ENCODE measurements at regions of chr10 and their contacts with region 1.

Region 1: GRCh38 chr10:111872591-111872990 is 311.0 kb downstream of the GPAM start:
- DNase-seq: no peak
- H3K4me3 Mint-ChIP-seq: no peak overlapping the region
- H3K27ac Mint-ChIP-seq: no peak overlapping the region
- H3K4me1 Mint-ChIP-seq: no peaks in the 10 kb centered on the region
- H3K27me3 Mint-ChIP-seq: no peaks in the 10 kb centered on the region

Region 2: DNA sequence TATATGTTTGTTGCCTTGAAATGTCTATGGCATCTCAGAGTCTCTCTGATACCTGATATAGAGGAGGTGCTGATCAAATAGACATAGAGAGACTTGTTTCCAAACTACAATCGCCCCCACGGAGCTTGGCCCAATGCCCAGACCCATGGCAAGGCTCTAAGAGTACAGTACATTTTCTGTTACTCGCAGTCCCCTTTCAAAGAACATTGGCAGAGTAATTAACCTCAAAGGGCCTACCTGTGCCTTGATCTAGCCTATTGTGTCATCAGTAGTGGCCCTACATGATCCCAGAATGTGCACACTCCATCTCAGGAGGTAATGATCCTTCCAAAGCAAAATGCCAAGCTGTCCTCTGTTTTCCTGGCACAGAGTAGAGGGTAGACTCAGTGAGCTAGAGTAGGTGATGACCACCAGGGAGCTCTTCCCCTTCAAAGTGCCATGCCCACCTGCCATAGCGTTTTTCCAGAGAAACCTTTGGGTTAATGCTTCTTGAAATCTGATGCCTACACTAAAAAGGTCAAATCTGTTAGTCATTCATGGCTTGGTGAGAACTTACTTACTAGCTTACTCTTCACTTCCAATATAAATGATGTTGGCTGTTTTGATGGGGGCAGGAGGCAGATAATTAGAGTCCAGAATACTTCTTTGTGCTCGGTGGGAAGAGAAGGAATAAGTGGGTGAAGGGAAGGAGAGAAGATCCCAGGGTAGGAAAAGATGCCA is 460.1 kb after region 1 on chr10:
- intact Hi-C with region 1: loop called (anchors 10 kb)
- DNase-seq: no peak
- H3K4me3 Mint-ChIP-seq: no peak overlapping the region
- H3K27ac Mint-ChIP-seq: no peak overlapping the region
- H3K4me1 Mint-ChIP-seq: peaks cover 7% of the 10 kb centered on the region
- H3K27me3 Mint-ChIP-seq: peaks cover 9% of the 10 kb centered on the region

Measured in activated CD4-positive, alpha-beta T cell treated with anti-CD3 and anti-CD28 coated beads, Interleukin-2, amount 10 ng/mL, durations not matched to agents 24 days and 14 days (primary cell).